Naive thymus-derived CD4-positive, alpha-beta T cell (primary cell): ENCODE measurements at regions of chr1 and their contacts with region 1.

Region 1: GRCh38 chr1:54287176-54287650 is 87.2 kb downstream of the MRPL37 start:
- DNase-seq: peak; percentile 21 to 82 (median 73)
- ATAC-seq: peak; percentile 76
- H3K4me3 ChIP-seq: peak overlapping the region; percentile 21
- H3K4me3 Mint-ChIP-seq: peak overlapping the region; percentile 79 to 90 (median 87)
- H3K27ac ChIP-seq: peak overlapping the region; percentile 85
- H3K27ac Mint-ChIP-seq: peak overlapping the region; percentile 87 to 99 (median 96)
- H3K4me1 ChIP-seq: peaks cover 6 to 90% of the 10 kb centered on the region in 2 donors
- H3K4me1 Mint-ChIP-seq: peaks cover 59 to 100% (median 94%) of the 10 kb centered on the region in 7 donors
- H3K27me3 ChIP-seq: no peaks in the 10 kb centered on the region
- H3K27me3 Mint-ChIP-seq: no peaks in the 10 kb centered on the region

Region 2: DNA sequence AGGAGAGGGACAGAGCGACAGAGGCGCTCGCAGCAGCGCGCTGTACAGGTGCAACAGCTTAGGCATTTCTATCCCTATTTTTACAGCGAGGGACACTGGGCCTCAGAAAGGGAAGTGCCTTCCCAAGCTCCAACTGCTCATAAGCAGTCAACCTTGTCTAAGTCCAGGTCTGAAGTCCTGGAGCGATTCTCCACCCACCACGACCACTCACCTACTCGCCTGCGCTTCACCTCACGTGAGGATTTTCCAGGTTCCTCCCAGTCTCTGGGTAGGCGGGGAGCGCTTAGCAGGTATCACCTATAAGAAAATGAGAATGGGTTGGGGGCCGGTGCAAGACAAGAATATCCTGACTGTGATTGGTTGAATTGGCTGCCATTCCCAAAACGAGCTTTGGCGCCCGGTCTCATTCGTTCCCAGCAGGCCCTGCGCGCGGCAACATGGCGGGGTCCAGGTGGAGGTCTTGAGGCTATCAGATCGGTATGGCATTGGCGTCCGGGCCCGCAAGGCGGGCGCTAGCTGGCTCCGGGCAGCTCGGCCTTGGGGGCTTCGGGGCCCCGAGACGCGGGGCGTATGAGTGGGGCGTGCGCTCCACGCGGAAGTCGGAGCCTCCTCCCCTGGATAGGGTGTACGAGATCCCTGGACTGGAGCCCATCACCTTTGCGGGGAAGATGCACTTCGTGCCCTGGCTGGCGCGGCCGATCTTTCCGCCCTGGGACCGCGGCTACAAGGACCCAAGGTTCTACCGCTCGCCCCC is 87.3 kb before region 1 on chr1 and contains the starts of genes CYB5RL and MRPL37:
- CTCF ChIA-PET with region 1: no interaction called
- POLR2A ChIA-PET with region 1: interaction called, 6 read pairs
- intact Hi-C with region 1: loop called (anchors 1 to 2 kb)
- DNase-seq: peak; percentile 65 to 94 (median 91)
- ATAC-seq: peak; percentile 99
- H3K4me3 ChIP-seq: peak within 1 kb of the TSS; percentile 69
- H3K4me3 Mint-ChIP-seq: peak within 1 kb of the TSS; percentile 90 to 96 (median 92)
- H3K27ac ChIP-seq: peak within 1 kb of the TSS; percentile 81
- H3K27ac Mint-ChIP-seq: peak within 1 kb of the TSS; percentile 64 to 93 (median 87)
- H3K4me1 ChIP-seq: peaks cover 9 to 17% of the 10 kb centered on the region in 2 donors
- H3K4me1 Mint-ChIP-seq: peaks cover 27 to 44% (median 40%) of the 10 kb centered on the region in 7 donors
- H3K27me3 ChIP-seq: no peaks in the 10 kb centered on the region
- H3K27me3 Mint-ChIP-seq: no peaks in the 10 kb centered on the region
- total RNA-seq, gene CYB5RL: 5.1 to 13.5 (median 7.1) TPM
- total RNA-seq, gene MRPL37: 25.4 to 86.7 (median 36.4) TPM

Region 3: GRCh38 chr1:54275349-54275748 is 11.9 kb before region 1 on chr1:
- CTCF ChIA-PET with region 1: interaction called, 5 read pairs
- POLR2A ChIA-PET with region 1: interaction called, 4 read pairs
- intact Hi-C with region 1: loop called in 1 of 2 experiments (anchors 1 kb)
- DNase-seq: no peak
- ATAC-seq: no peak
- H3K4me3 ChIP-seq: no peak overlapping the region
- H3K4me3 Mint-ChIP-seq: peak overlapping the region in 1 of 10 donors; percentile 33
- H3K27ac ChIP-seq: no peak overlapping the region
- H3K27ac Mint-ChIP-seq: peak overlapping the region in 5 of 9 donors; percentile 62 to 83 (median 75)
- H3K4me1 ChIP-seq: peaks cover 0 to 46% of the 10 kb centered on the region in 2 donors
- H3K4me1 Mint-ChIP-seq: peaks cover 25 to 76% (median 64%) of the 10 kb centered on the region in 7 donors
- H3K27me3 ChIP-seq: no peaks in the 10 kb centered on the region
- H3K27me3 Mint-ChIP-seq: no peaks in the 10 kb centered on the region